ENCODE measurements at regions of chr9 and their contacts with region 1.

Region 1: DNA sequence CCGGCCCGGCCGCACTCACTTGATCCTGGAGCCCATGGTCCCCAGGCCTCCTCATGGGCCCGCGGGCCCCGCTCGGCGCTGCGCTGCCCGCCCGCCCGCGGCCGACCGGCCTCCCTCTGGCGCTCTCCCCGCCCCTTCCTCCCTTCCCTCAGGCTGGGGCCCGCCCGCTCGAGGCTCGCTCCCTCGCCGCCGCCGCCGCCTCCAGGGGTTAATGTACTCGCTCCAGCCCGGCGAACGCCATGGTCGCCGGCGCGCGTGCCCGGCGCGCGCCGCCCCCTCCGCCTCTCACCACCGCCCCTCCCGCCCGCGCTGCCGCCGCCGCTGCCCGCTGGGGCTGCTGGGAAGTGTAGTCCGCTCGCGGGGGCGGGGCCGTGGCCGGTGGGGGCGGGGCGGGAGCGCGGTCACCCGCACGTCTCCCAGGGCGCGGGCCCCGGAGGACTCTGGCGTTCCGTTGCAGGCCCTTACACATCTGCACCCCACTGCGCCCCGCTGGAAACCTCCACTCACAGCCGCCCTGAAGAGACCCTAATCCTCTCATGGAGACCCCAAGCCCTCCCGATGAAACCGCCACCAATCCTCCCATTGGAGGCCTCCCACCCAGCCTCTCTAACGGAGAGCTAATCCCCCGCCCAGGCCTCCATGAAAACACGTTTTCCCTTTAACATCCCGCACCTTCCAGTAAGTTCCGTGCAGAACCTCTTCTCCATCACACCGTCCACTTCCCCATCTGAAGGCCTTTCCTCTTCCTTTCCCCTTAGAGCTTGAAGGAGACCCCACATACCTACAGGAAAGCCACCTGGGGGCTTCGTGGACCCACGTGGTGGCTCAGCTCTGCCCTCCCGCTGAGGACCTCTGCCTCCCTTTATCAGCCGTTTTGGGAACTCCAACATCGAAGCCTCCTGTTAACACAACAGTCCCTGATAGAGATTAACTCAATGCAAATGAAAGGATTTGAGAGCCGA is at the start of gene DENND1A:
- DNase-seq: peak; percentile 93
- ATAC-seq: peak; percentile 97
- H3K4me3 ChIP-seq: peak within 1 kb of the TSS; percentile 62
- H3K27ac ChIP-seq: peak within 1 kb of the TSS; percentile 47
- H3K4me1 ChIP-seq: peaks cover 40% of the 10 kb centered on the region
- H3K27me3 ChIP-seq: peaks cover 8% of the 10 kb centered on the region
- CTCF ChIP-seq: no peak
- total RNA-seq, gene DENND1A: 15.4 TPM

Region 2: DNA sequence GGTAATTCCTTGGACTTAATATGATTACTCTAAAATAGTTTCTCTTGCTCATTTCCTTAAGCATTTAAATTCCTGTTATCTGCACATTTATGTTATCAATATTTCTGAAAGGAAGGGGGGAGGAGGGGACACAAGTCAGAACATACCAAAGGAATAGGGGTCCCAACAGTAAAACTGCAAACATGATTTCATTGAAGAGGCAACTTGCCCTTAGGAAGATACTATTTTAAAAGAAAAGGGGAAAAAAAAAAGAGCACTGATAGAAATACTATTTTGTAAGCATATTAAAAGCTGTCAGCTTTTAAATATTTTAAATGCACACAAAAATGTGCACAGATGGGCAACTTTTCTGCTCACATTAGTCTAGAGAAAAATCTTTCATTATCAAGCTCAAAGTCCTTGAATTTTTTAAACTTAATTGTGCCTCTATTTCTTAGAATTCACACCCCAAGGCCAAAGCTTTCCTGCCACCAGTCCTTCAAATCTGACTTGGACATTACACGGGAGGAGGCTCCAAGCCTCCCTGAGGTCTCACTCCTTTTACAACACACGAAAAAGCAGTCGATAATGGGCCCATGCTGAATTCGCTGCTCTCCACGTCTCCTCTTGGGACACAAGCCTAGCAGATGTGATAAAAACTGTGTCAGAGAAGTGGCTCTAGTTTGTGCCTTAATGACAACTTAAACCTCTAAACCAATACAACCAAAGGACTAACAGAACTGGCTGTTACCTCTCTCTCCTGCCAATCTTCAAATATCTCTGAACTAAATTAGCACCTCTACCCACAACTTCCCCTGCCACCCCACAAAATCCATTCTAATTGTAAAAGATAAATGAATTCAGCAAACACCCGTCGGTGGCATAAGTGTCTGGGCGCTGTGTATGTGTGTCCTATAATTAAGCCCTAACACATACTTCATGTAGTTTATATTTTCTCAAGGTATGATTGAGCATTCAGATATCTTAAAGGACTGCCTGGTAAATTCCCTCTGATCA is 154.6 kb before region 1 on chr9:
- intact Hi-C with region 1: no loop called
- DNase-seq: no peak
- ATAC-seq: no peak
- H3K4me3 ChIP-seq: no peak overlapping the region
- H3K27ac ChIP-seq: no peak overlapping the region
- H3K4me1 ChIP-seq: peaks cover 5% of the 10 kb centered on the region
- H3K27me3 ChIP-seq: no peaks in the 10 kb centered on the region
- CTCF ChIP-seq: no peak

Region 3: GRCh38 chr9:123893831-123894460 is 36.2 kb before region 1 on chr9:
- intact Hi-C with region 1: no loop called
- DNase-seq: no peak
- ATAC-seq: no peak
- H3K4me3 ChIP-seq: no peak overlapping the region
- H3K27ac ChIP-seq: no peak overlapping the region
- H3K4me1 ChIP-seq: no peaks in the 10 kb centered on the region
- H3K27me3 ChIP-seq: no peaks in the 10 kb centered on the region
- CTCF ChIP-seq: no peak

Region 4: DNA sequence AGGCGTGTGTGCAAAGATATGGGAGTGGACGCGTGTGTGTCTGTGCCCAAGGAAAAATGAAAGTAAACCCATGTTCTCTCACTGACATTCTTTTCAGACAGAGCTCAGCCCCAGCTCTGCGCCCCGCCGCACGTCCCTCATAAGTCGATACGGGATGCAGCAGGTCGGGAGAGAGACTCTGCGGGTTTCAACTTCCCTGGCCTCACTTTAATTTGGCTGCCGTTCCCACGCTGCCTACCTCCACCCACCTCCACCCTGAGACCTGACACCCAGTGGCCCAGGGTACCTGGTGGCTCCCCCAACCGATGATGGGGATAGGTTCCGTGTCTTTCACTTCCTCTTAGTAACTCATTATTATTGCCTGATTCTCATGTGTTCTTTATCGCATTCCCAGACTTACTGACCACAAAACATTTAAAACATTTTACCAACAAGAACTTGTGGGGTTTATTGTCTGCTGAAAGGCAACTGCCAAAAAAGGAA is 100.9 kb after region 1 on chr9:
- intact Hi-C with region 1: no loop called
- DNase-seq: no peak
- ATAC-seq: no peak
- H3K4me3 ChIP-seq: no peak overlapping the region
- H3K27ac ChIP-seq: no peak overlapping the region
- H3K4me1 ChIP-seq: no peaks in the 10 kb centered on the region
- H3K27me3 ChIP-seq: peaks cover 68% of the 10 kb centered on the region
- CTCF ChIP-seq: no peak

Region 5: DNA sequence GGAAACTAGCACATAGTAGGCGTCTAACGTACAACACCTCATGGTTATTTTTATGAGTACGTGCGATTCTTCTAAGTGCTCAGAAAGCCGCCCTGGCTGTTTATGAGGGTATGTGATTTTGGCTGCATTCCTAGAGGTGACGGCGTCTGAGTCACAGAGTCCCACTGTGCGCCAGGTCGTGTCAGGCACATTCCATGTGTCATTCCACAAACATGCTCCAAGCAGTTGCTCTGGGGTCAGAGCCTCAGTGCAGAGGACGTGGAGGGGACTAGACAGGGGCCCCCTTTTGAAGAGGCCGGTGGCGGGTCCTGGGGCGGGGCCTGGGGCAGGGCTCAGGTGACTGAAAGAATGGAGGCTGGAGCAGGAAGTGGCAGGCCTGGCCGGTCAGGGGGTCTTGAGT is 379.5 kb after region 1 on chr9:
- intact Hi-C with region 1: loop called (anchors 5 kb)
- DNase-seq: no peak
- ATAC-seq: peak; percentile 78
- H3K4me3 ChIP-seq: no peak overlapping the region
- H3K27ac ChIP-seq: no peak overlapping the region
- H3K4me1 ChIP-seq: no peaks in the 10 kb centered on the region
- H3K27me3 ChIP-seq: no peaks in the 10 kb centered on the region
- CTCF ChIP-seq: no peak

Measured in upper lobe of right lung (tissue), 1 donor.